ENCODE measurements at regions of chr13 and their contacts with region 1.

Region 1: DNA sequence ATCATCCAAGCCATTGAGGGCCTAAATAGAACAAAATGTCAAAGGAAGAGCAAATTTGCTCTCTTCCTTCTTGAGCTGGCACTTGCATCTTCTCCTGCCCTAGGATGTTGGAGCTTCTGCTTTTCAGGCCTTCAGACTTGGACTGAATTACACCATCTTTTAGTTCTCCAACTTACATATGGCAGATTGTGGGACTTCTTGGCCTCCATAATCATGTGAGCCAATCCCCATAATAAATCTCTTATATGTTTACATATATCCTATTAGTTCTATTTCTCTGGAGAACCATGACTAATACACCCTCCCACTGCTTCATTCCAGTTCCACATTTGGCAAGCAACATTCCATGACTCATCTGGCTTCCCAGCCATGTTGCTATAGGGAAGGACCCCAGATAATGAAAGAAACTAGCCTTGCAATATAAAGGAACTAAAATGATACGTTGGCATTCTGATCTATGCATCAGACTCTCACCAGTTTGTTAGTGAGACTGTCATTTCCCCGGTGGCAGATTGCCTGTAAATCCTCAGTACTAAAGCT is 11.0 kb upstream of the ACOD1 start:
- DNase-seq: peak; percentile 98
- H3K4me3 Mint-ChIP-seq: no peak overlapping the region
- H3K27ac Mint-ChIP-seq: peak overlapping the region; percentile 78
- H3K4me1 Mint-ChIP-seq: peaks cover 38% of the 10 kb centered on the region
- H3K27me3 Mint-ChIP-seq: no peaks in the 10 kb centered on the region
- CTCF ChIP-seq: no peak

Region 2: GRCh38 chr13:76917095-76917494 is 20.3 kb before region 1 on chr13:
- CTCF ChIA-PET with region 1: interaction called, 4 read pairs
- POLR2A ChIA-PET with region 1: interaction called, 11 read pairs
- intact Hi-C with region 1: no loop called
- DNase-seq: peak; percentile 46
- H3K4me3 Mint-ChIP-seq: no peak overlapping the region
- H3K27ac Mint-ChIP-seq: peak overlapping the region; percentile 91
- H3K4me1 Mint-ChIP-seq: peaks cover 19% of the 10 kb centered on the region
- H3K27me3 Mint-ChIP-seq: no peaks in the 10 kb centered on the region
- CTCF ChIP-seq: no peak

Region 3: GRCh38 chr13:76965759-76966421 is 28.5 kb after region 1 on chr13:
- CTCF ChIA-PET with region 1: interaction called, 4 read pairs
- POLR2A ChIA-PET with region 1: interaction called, 11 read pairs
- intact Hi-C with region 1: no loop called
- DNase-seq: peak; percentile 89
- H3K4me3 Mint-ChIP-seq: no peak overlapping the region
- H3K27ac Mint-ChIP-seq: no peak overlapping the region
- H3K4me1 Mint-ChIP-seq: peaks cover 20% of the 10 kb centered on the region
- H3K27me3 Mint-ChIP-seq: no peaks in the 10 kb centered on the region
- CTCF ChIP-seq: no peak

Region 4: GRCh38 chr13:76971851-76972829 is 34.8 kb after region 1 on chr13:
- CTCF ChIA-PET with region 1: interaction called, 5 read pairs
- POLR2A ChIA-PET with region 1: interaction called, 11 read pairs
- intact Hi-C with region 1: loop called (anchors 5 kb)
- DNase-seq: no peak
- H3K4me3 Mint-ChIP-seq: no peak overlapping the region
- H3K27ac Mint-ChIP-seq: no peak overlapping the region
- H3K4me1 Mint-ChIP-seq: peaks cover 21% of the 10 kb centered on the region
- H3K27me3 Mint-ChIP-seq: no peaks in the 10 kb centered on the region
- CTCF ChIP-seq: no peak

Measured in MCF 10A (cell line).